Activated CD4-positive, alpha-beta T cell treated with anti-CD3 and anti-CD28 coated beads, Interleukin-2, amount 10 ng/mL, durations not matched to agents 7 days and 5 days (primary cell): ENCODE measurements at regions of chr1 and their contacts with region 1.

Region 1: DNA sequence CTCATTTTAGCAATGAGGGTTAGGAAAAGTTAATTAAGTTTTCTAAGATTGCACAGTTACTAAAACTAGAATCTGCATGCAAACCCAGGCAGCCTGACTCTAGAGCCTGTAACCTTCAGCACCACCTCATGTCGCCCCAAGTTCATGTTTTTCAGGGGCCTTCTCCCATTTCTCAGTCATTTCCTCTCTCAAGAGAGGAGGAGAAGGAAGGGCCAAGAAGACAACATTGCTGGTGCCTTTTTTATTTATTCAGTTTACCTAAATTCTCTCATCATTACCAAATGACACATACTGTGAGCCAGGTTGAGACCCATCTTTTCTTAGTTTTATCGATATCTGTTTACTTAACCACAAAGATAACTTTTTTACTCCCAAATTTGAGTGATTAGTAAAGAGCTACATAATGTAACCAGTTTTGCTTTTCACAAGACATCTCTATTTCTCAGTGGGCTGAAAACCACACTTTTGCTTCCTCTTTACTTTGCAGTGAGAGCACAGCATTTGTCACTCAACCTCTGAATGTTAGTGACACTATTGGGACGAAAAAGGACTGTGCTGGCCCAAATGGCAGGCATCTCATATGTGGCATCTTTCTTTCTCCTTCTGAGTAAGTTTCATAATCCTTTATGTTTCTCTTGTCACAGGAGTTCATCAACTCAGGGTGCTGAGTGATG is at the start of gene CD101:
- DNase-seq: peak; percentile 42
- H3K4me3 Mint-ChIP-seq: peak within 1 kb of the TSS; percentile 6
- H3K27ac Mint-ChIP-seq: peak within 1 kb of the TSS; percentile 92
- H3K4me1 Mint-ChIP-seq: peaks cover 54% of the 10 kb centered on the region
- H3K27me3 Mint-ChIP-seq: no peaks in the 10 kb centered on the region
- total RNA-seq, gene CD101: 3.4 to 4.2 TPM

Region 2: DNA sequence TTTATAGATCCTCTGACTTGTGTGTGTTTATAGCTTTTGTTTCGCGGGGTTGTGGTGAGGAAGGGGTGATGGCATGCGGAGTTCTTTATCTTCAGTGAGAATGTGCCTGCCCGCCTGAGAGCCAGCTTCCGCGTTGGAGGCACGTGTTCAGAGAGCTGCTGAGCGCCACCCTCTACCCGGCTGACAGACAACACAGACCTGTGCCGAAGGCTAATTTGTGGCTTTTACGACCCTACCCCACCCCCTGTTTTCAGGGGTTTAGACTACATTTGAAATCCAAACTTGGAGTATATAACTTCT is 14.2 kb before region 1 on chr1:
- CTCF ChIA-PET with region 1: interaction called, 10 read pairs
- POLR2A ChIA-PET with region 1: no interaction called
- DNase-seq: peak; percentile 74
- H3K4me3 Mint-ChIP-seq: peak overlapping the region; percentile 53
- H3K27ac Mint-ChIP-seq: peak overlapping the region; percentile 94
- H3K4me1 Mint-ChIP-seq: peaks cover 44% of the 10 kb centered on the region
- H3K27me3 Mint-ChIP-seq: no peaks in the 10 kb centered on the region